SK-N-SH (cell line): ENCODE measurements at regions of chr14 and their contacts with region 1.

Region 1: GRCh38 chr14:103104654-103105452 is 10.3 kb downstream of the EXOC3L4 start:
- DNase-seq: peak; percentile 91
- H3K4me3 ChIP-seq: peak overlapping the region in 1 of 2 experiments; percentile 57; a peak in 1 of 4 replicates
- H3K27ac ChIP-seq: no peak overlapping the region
- H3K4me1 ChIP-seq: peaks cover 6 to 9% of the 10 kb centered on the region in 2 experiments; a peak in 3 of 4 replicates
- H3K27me3 ChIP-seq: peaks cover 25% of the 10 kb centered on the region
- CTCF ChIP-seq: peak; percentile 95
- EP300 ChIP-seq: no peak
- RAD21 ChIP-seq: peak; percentile 87

Region 2: DNA sequence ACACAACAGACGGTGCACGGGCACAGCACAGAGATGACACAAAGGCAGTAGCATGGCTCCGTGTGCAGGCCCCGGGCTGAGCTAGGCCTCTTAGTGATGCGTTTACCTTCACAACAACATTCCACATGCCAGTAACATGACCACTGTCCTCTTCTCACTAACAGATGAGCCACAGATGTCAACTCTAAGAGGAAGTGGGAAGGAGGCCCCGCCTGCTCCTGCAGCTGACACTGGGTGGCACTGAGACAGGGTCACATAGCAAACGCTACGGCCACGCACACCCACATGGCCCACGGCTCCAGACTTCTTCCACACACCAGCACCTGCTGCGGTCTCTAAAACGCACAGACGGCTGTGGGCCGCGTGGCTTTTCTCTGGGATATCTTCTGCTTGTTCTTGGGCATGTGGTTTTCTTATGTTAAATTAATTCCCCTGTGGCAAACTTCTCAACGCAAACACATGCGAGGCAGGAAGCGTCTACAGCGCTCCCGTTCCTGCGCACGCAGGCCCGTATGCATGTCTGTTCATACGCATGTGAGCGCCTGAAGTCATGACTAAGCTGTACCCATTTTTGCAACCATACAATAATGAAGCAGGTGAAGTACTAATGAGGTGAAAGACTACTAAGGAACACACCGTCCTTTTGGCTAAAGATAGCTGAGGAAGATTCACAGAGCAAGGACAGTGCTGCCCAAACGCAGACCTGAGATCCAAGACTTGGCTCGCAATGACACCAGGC is 155.6 kb before region 1 on chr14:
- CTCF ChIA-PET with region 1: no interaction called
- POLR2A ChIA-PET with region 1: no interaction called
- DNase-seq: no peak
- H3K4me3 ChIP-seq: no peak overlapping the region
- H3K27ac ChIP-seq: no peak overlapping the region
- H3K4me1 ChIP-seq: peaks cover 0 to 3% of the 10 kb centered on the region in 2 experiments; a peak in 1 of 4 replicates
- H3K27me3 ChIP-seq: no peaks in the 10 kb centered on the region
- CTCF ChIP-seq: no peak
- EP300 ChIP-seq: no peak
- RAD21 ChIP-seq: no peak

Region 3: GRCh38 chr14:103014466-103015319 is 90.2 kb before region 1 on chr14:
- CTCF ChIA-PET with region 1: no interaction called
- POLR2A ChIA-PET with region 1: no interaction called
- DNase-seq: no peak
- H3K4me3 ChIP-seq: no peak overlapping the region
- H3K27ac ChIP-seq: peak overlapping the region in 1 of 2 experiments; percentile 8; a peak in 1 of 4 replicates
- H3K4me1 ChIP-seq: peaks cover 5 to 15% of the 10 kb centered on the region in 2 experiments; a peak in 2 of 4 replicates
- H3K27me3 ChIP-seq: no peaks in the 10 kb centered on the region
- CTCF ChIP-seq: no peak
- EP300 ChIP-seq: no peak
- RAD21 ChIP-seq: no peak

Region 4: GRCh38 chr14:103078093-103078749 is 26.6 kb before region 1 on chr14:
- CTCF ChIA-PET with region 1: interaction called, 39 read pairs
- POLR2A ChIA-PET with region 1: no interaction called
- DNase-seq: peak; percentile 86
- H3K4me3 ChIP-seq: no peak overlapping the region
- H3K27ac ChIP-seq: no peak overlapping the region
- H3K4me1 ChIP-seq: peaks cover 0 to 5% of the 10 kb centered on the region in 2 experiments; a peak in 1 of 4 replicates
- H3K27me3 ChIP-seq: no peaks in the 10 kb centered on the region
- CTCF ChIP-seq: peak; percentile 70
- EP300 ChIP-seq: no peak
- RAD21 ChIP-seq: peak; percentile 79

Region 5: GRCh38 chr14:103141119-103141796 is 36.4 kb after region 1 on chr14:
- CTCF ChIA-PET with region 1: interaction called, 45 read pairs
- POLR2A ChIA-PET with region 1: no interaction called
- DNase-seq: peak; percentile 63
- H3K4me3 ChIP-seq: no peak overlapping the region
- H3K27ac ChIP-seq: no peak overlapping the region
- H3K4me1 ChIP-seq: peaks cover 12 to 14% of the 10 kb centered on the region in 2 experiments
- H3K27me3 ChIP-seq: no peaks in the 10 kb centered on the region
- CTCF ChIP-seq: peak; percentile 73
- EP300 ChIP-seq: no peak
- RAD21 ChIP-seq: peak; percentile 52

Region 6: DNA sequence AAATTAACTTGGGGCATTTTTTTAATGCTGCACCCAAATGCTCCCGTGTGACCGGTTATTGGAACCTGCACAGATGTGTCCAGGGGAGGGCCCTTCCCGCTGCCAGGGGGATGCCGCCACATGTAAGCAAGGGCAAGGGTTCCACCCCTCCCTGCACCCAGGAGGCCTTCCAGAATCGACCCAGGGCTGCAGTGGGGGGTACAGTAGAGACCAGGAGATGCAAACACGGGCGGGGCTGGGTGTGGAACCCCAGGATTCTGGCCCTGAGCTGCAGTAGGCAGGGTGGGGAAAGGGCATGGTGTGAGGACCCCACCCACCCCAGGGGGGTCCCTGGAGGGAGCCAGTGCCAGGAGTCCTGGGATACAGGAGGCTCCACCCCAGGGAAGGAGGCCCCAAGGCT is 72.5 kb after region 1 on chr14:
- CTCF ChIA-PET with region 1: interaction called, 140 read pairs
- POLR2A ChIA-PET with region 1: no interaction called
- DNase-seq: no peak
- H3K4me3 ChIP-seq: no peak overlapping the region
- H3K27ac ChIP-seq: no peak overlapping the region
- H3K4me1 ChIP-seq: no peaks in the 10 kb centered on the region
- H3K27me3 ChIP-seq: no peaks in the 10 kb centered on the region
- CTCF ChIP-seq: no peak
- EP300 ChIP-seq: no peak
- RAD21 ChIP-seq: no peak

Region 7: DNA sequence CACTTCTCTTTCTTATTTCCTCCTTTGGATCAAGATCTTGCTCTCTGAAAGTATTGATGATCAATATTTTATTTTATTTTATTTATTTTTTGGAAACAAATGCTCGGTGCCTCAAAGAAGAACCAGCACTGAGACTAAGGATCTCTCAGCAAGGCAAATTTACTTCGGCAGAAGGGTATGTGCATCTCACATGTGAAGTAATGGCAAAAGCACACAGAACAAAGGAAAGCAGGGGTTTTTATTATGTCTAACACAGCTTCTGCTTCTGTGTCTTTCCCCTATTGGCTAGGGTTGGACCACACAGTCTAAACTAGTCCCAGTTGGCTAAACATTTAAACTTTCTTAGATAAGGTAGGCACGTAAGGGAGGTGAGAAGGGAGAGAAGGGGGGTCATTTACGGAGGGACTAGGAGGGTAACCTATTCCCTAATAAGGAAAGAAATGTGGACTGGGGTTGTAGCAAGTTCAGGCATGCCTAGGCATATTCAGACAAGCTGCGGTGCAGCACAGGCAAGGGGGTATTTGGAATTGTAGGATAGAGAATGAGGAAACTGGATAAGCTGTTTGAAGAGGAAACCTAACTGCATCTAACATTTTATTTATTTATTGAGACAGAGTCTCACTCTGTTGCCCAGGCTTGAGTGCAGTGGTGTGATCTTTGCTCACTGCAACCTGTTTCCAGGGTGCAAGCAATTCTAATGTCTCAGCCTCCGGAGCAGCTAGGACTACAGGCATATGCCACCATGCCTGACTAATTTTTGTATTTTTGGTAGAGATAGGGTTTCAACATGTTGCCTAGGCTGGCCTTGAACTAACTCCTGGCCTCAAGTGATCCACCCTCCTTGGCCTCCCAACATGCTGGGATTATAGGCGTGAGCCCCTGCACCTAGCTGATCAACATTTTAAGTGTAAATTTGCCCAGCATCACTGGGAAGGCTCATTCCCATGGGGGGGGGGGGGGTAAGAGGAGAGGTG is 139.2 kb after region 1 on chr14:
- CTCF ChIA-PET with region 1: interaction called, 11 read pairs
- POLR2A ChIA-PET with region 1: no interaction called
- DNase-seq: no peak
- H3K4me3 ChIP-seq: no peak overlapping the region
- H3K27ac ChIP-seq: no peak overlapping the region
- H3K4me1 ChIP-seq: no peaks in the 10 kb centered on the region
- H3K27me3 ChIP-seq: no peaks in the 10 kb centered on the region
- CTCF ChIP-seq: no peak
- EP300 ChIP-seq: no peak
- RAD21 ChIP-seq: no peak

Region 8: GRCh38 chr14:103298620-103299019 is 193.8 kb after region 1 on chr14:
- CTCF ChIA-PET with region 1: interaction called, 250 read pairs
- POLR2A ChIA-PET with region 1: no interaction called
- DNase-seq: peak; percentile 35
- H3K4me3 ChIP-seq: no peak overlapping the region
- H3K27ac ChIP-seq: no peak overlapping the region
- H3K4me1 ChIP-seq: no peaks in the 10 kb centered on the region
- H3K27me3 ChIP-seq: no peaks in the 10 kb centered on the region
- CTCF ChIP-seq: no peak
- EP300 ChIP-seq: no peak
- RAD21 ChIP-seq: no peak

Region 9: GRCh38 chr14:103456167-103456835 is 351.4 kb after region 1 on chr14:
- CTCF ChIA-PET with region 1: no interaction called
- POLR2A ChIA-PET with region 1: no interaction called
- DNase-seq: no peak
- H3K4me3 ChIP-seq: no peak overlapping the region; a peak in 1 of 4 replicates
- H3K27ac ChIP-seq: no peak overlapping the region
- H3K4me1 ChIP-seq: peaks cover 0 to 5% of the 10 kb centered on the region in 2 experiments; a peak in 2 of 4 replicates
- H3K27me3 ChIP-seq: no peaks in the 10 kb centered on the region
- CTCF ChIP-seq: no peak
- EP300 ChIP-seq: no peak
- RAD21 ChIP-seq: no peak